ENCODE measurements at regions of chr1 and their contacts with region 1.

Region 1: GRCh38 chr1:110196917-110197765 is 13.0 kb upstream of the KCNC4 start:
- DNase-seq: no peak
- H3K4me3 ChIP-seq: no peak overlapping the region
- CTCF ChIP-seq: peak; percentile 92

Region 2: GRCh38 chr1:110176299-110176956 is 20.7 kb before region 1 on chr1:
- CTCF ChIA-PET with region 1: interaction called, 17 read pairs
- POLR2A ChIA-PET with region 1: no interaction called
- DNase-seq: no peak
- H3K4me3 ChIP-seq: no peak overlapping the region
- CTCF ChIP-seq: no peak